Ascending aorta (tissue), 2 donors: ENCODE measurements at regions of chr2 and their contacts with region 1.

Region 1: GRCh38 chr2:24490674-24491625 is at the start of gene NCOA1:
- DNase-seq: peak; percentile 40 to 93
- H3K4me3 ChIP-seq: peak within 1 kb of the TSS; percentile 90 to 93
- H3K27ac ChIP-seq: peak within 1 kb of the TSS; percentile 95 to 96
- H3K4me1 ChIP-seq: peaks cover 0 to 9% of the 10 kb centered on the region in 2 donors
- H3K27me3 ChIP-seq: no peaks in the 10 kb centered on the region
- CTCF ChIP-seq: no peak
- total RNA-seq, gene NCOA1: 19.3 TPM

Region 2: DNA sequence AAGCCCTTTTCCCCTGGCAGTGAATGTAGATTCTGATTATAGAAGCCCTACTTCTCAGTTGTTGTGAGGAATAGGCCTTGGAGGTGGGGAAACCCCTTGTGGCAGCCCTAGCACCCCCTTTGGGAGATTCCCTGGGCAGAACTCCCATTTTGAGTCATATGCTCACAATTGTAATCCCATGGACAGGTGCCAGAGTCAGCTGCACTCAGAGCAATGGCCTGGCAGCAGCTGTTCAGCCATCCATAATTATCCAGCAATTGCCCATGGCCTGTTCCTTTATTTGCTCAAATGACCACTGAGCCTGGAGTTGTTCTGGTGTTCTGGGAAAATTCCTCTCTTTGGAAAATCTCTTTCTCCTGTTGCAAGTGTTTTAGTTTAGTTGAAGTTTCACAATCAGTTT is 230.5 kb after region 1 on chr2:
- intact Hi-C with region 1: loop called (anchors 5 kb)
- DNase-seq: peak; percentile 11 to 77
- H3K4me3 ChIP-seq: no peak overlapping the region
- H3K27ac ChIP-seq: peak overlapping the region; percentile 3 to 65
- H3K4me1 ChIP-seq: peaks cover 0 to 8% of the 10 kb centered on the region in 2 donors
- H3K27me3 ChIP-seq: no peaks in the 10 kb centered on the region
- CTCF ChIP-seq: no peak

Region 3: DNA sequence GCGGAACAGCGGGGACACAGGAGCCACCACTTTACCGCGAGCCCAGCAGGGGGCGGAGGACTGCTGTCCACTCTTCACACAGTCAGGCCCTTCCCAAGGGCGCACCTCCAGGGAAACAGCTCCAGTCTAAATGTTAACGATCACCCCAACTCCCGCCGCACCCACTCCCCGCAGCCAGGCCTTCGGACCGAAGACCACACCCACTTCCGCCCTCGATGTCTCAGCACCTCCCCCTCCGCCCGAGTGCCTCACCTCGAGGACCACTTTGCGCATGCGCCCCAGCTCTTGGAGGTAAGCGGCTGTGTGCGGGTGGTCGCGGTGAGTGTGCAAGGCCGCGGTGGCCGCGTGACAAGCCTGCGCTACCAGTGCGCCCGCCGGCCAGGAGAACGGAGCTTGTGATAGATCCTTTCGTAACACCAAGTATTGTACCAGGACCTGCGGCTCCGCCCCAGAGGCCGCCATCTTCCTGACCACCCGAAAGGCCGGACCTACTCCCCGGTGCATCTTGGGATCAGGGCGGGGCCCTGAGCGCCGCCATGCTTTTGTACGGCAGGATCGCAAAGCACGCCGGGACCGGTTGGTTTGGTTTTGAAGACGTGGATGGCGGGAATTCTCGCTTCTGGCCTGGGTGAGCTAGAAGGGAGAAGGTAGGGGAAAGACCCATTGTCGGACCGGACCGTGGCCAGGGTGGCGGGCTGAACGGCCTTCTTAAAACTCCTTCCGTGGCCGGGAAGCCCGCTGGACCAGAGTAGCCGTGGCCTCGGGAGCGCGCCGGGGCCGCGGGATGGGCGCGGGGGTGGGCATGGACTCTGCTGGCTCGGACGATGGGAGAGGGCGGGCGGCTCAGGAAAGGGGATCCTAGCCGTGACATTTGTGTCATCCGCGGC is 302.2 kb after region 1 on chr2 and contains the starts of genes CENPO and PTRHD1:
- intact Hi-C with region 1: loop called (anchors 2 kb)
- DNase-seq: peak; percentile 87 to 98
- H3K4me3 ChIP-seq: peak within 1 kb of the TSS; percentile 72 to 74
- H3K27ac ChIP-seq: peak within 1 kb of the TSS; percentile 94 to 95
- H3K4me1 ChIP-seq: peaks cover 4 to 8% of the 10 kb centered on the region in 2 donors
- H3K27me3 ChIP-seq: no peaks in the 10 kb centered on the region
- CTCF ChIP-seq: peak; percentile 35 to 64 (median 60)
- total RNA-seq, gene CENPO: not detected
- total RNA-seq, gene PTRHD1: 18.8 TPM